AG04450 (cell line): ENCODE measurements at regions of chr2 and their contacts with region 1.

Region 1: GRCh38 chr2:20015472-20016083 is 3.1 kb upstream of the MATN3 start:
- DNase-seq: peak; percentile 18
- H3K4me3 ChIP-seq: no peak overlapping the region
- H3K27ac ChIP-seq: no peak overlapping the region
- H3K27me3 ChIP-seq: no peaks in the 10 kb centered on the region
- CTCF ChIP-seq: peak; percentile 63

Region 2: GRCh38 chr2:19219055-19219454 is 796.5 kb before region 1 on chr2:
- CTCF ChIA-PET with region 1: no interaction called
- POLR2A ChIA-PET with region 1: no interaction called
- DNase-seq: no peak
- H3K4me3 ChIP-seq: no peak overlapping the region
- H3K27ac ChIP-seq: no peak overlapping the region
- H3K27me3 ChIP-seq: no peaks in the 10 kb centered on the region
- CTCF ChIP-seq: no peak

Region 3: DNA sequence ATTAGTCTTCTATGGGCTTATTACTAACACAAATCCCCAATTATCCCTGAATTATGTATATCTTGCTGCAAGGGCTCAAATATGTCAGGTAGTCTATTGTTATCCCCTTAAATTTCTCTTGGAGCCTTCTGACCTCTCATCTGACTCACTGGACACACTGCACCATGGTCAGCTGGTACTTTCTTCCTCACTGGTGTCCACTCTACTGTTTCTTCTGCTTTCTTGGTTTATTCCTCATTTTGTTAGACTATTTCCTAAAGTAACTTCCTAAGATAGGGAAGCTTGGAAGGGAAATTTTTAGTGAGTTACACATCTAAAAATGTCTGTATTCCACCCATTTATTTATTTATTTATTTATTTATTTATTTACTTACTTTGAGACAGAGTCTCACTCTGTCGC is 52.2 kb before region 1 on chr2:
- CTCF ChIA-PET with region 1: interaction called, 25 read pairs
- POLR2A ChIA-PET with region 1: no interaction called
- DNase-seq: no peak
- H3K4me3 ChIP-seq: no peak overlapping the region
- H3K27ac ChIP-seq: no peak overlapping the region
- H3K27me3 ChIP-seq: no peaks in the 10 kb centered on the region
- CTCF ChIP-seq: no peak

Region 4: GRCh38 chr2:20027705-20028434 is 12.3 kb after region 1 on chr2:
- CTCF ChIA-PET with region 1: interaction called, 73 read pairs
- POLR2A ChIA-PET with region 1: no interaction called
- DNase-seq: no peak
- H3K4me3 ChIP-seq: no peak overlapping the region
- H3K27ac ChIP-seq: no peak overlapping the region
- H3K27me3 ChIP-seq: no peaks in the 10 kb centered on the region
- CTCF ChIP-seq: no peak

Region 5: DNA sequence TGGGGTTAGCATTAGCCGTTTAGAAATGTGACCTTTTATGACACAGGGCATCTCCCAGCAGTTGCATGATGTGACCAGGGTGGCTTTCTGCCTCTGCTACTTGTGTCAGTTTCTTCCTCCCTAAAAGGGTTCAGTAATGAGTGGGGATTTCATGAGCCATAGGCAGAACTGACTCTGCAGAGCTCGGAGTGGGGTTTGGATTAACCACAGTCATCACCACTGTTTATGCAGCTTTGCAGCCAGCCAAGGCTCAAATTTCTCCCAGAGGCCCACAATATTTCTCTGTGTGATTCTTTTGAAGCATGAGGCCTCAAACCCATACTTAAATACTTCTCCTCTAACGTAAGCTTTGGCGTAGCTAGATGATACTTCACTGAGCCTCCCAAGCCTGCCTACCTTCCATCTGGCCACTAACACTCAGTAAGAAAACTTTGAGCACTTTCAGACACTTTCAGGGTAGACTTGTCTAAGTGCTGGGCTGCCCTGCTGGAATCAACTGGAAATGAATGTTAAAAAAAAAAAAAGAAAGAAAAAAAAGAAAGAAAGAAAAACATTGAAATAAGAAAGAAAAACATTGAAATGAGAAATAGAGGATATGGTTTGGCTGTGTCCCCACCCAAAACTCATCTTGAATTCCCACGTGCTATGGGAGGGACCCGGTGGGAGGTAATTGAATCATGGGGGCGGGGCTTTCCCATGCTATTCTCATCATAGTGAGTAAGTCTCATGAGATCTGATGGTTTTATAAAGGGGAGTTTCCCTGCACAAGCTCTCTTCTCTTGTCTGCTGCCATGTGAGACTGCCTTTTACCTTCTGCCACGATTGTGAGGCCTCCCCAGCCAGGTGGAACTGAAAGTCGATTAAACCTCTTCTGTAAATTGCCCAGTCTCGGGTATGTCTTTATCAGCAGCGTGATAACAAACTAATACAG is 47.3 kb after region 1 on chr2:
- CTCF ChIA-PET with region 1: interaction called, 12 read pairs
- POLR2A ChIA-PET with region 1: no interaction called
- DNase-seq: peak; percentile 96
- H3K4me3 ChIP-seq: no peak overlapping the region
- H3K27ac ChIP-seq: peak overlapping the region; percentile 95
- H3K27me3 ChIP-seq: no peaks in the 10 kb centered on the region
- CTCF ChIP-seq: peak; percentile 41

Region 6: DNA sequence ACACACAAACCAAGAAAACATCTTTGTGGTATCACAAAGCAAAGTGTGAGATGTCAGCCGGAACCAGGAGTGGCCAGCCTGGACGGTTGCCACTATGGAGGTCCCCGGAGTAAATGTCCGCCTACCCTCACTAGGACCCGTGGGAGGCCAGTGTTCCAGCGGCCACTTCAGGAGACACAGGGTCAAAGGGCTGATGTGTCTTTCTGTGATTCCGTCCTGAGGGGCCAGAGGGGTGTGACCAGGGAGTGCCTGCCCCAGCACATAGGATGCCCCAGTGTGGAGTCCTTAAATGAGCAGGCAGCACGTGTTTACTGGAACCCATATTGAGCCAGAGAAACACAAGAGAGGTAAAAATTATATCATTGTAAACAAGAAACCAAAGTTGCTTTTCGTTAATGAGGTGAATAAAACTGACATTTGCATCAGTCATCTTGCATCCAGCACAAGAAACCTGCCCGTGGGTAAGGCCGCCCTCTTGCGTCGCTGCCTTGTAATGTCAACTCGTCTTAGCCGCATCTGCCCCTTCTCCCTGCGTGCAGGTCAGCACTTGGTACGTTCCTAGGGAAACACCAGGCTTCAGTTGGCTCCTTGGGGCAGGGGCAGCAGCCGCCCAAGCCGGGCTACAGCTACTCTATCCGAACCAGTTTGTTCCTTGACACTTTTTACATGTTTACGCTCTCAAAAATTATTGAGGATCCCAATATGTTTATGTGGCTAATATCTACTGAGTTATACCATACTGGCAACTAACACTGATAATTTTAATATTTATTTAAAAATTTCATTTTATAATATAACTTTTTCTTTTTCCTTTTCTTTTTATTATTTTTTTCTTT is 82.5 kb after region 1 on chr2:
- CTCF ChIA-PET with region 1: interaction called, 91 read pairs
- POLR2A ChIA-PET with region 1: interaction called, 5 read pairs
- DNase-seq: peak; percentile 82
- H3K4me3 ChIP-seq: no peak overlapping the region
- H3K27ac ChIP-seq: no peak overlapping the region
- H3K27me3 ChIP-seq: no peaks in the 10 kb centered on the region
- CTCF ChIP-seq: peak; percentile 90